IMR-90 (cell line): ENCODE measurements at regions of chr5 and their contacts with region 1.

Region 1: GRCh38 chr5:129767906-129768380 is 20.0 kb downstream of the MINAR2 start:
- DNase-seq: peak; percentile 86
- ATAC-seq: peak; percentile 96
- H3K4me3 ChIP-seq: no peak overlapping the region
- H3K27ac ChIP-seq: no peak overlapping the region
- H3K4me1 ChIP-seq: no peaks in the 10 kb centered on the region
- H3K27me3 ChIP-seq: no peaks in the 10 kb centered on the region
- CTCF ChIP-seq: peak; percentile 100
- POLR2A ChIP-seq: no peak
- RAD21 ChIP-seq: peak; percentile 91

Region 2: DNA sequence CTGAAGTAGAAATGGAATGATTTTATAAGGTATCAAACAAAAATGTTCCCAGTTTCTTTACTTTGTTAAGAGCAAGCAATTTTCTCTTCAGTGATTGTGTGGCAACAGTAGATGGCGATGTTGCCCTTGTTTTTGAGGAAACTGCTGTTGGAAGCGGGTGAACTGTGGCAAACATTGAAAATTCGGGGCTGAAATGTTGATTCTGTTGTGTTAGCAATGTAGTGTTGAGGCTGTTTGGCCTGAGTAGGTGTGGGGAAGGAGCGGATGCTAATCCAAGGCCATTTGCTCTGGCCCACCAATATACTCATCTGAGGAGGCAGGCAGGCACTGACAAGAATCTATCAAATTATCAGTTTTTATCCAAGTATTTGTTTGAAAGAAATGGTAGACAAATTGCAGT is 1554.6 kb before region 1 on chr5:
- CTCF ChIA-PET with region 1: no interaction called
- POLR2A ChIA-PET with region 1: no interaction called
- dilution Hi-C with region 1: no loop called
- in situ Hi-C with region 1: no loop called
- intact Hi-C with region 1: loop called (anchors 5 kb)
- DNase-seq: peak; percentile 77
- ATAC-seq: peak; percentile 68
- H3K4me3 ChIP-seq: no peak overlapping the region
- H3K27ac ChIP-seq: no peak overlapping the region
- H3K4me1 ChIP-seq: peaks cover 3% of the 10 kb centered on the region; the same call in 1 of the 2 replicates
- H3K27me3 ChIP-seq: no peaks in the 10 kb centered on the region
- CTCF ChIP-seq: peak; percentile 92
- POLR2A ChIP-seq: 0 out of 2 replicates have a peak, but pooled peaks have one; percentile 38
- RAD21 ChIP-seq: peak; percentile 93

Region 3: GRCh38 chr5:129113871-129114270 is 654.1 kb before region 1 on chr5:
- CTCF ChIA-PET with region 1: no interaction called
- POLR2A ChIA-PET with region 1: no interaction called
- dilution Hi-C with region 1: no loop called
- in situ Hi-C with region 1: no loop called
- intact Hi-C with region 1: loop called (anchors 5 kb)
- DNase-seq: no peak
- ATAC-seq: no peak
- H3K4me3 ChIP-seq: no peak overlapping the region
- H3K27ac ChIP-seq: no peak overlapping the region
- H3K4me1 ChIP-seq: no peaks in the 10 kb centered on the region
- H3K27me3 ChIP-seq: no peaks in the 10 kb centered on the region
- CTCF ChIP-seq: 0 out of 2 replicates have a peak, but pooled peaks have one; percentile 7
- POLR2A ChIP-seq: no peak
- RAD21 ChIP-seq: no peak

Region 4: DNA sequence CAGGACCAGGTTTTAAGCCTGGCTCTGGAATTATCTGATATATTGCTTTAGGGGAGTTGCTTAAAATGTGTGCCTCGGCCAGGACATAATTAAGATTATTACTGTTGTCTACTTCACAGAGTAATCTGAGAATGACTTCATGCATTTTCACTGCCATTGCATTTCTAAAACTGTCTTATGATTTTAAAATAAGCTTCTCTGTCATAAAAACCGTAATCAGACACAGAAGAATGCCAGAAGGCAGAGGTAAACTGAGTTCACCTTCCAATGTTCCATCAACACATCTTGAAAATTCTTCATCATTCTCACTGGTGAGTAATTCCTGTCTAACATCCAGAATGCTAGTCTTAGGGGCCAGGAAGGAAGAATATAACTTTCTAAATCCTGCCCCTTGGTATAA is 626.2 kb before region 1 on chr5:
- CTCF ChIA-PET with region 1: no interaction called
- POLR2A ChIA-PET with region 1: no interaction called
- dilution Hi-C with region 1: no loop called
- in situ Hi-C with region 1: no loop called
- intact Hi-C with region 1: no loop called
- DNase-seq: no peak
- ATAC-seq: no peak
- H3K4me3 ChIP-seq: no peak overlapping the region
- H3K27ac ChIP-seq: no peak overlapping the region
- H3K4me1 ChIP-seq: no peaks in the 10 kb centered on the region
- H3K27me3 ChIP-seq: no peaks in the 10 kb centered on the region
- CTCF ChIP-seq: no peak
- POLR2A ChIP-seq: no peak
- RAD21 ChIP-seq: no peak

Region 5: DNA sequence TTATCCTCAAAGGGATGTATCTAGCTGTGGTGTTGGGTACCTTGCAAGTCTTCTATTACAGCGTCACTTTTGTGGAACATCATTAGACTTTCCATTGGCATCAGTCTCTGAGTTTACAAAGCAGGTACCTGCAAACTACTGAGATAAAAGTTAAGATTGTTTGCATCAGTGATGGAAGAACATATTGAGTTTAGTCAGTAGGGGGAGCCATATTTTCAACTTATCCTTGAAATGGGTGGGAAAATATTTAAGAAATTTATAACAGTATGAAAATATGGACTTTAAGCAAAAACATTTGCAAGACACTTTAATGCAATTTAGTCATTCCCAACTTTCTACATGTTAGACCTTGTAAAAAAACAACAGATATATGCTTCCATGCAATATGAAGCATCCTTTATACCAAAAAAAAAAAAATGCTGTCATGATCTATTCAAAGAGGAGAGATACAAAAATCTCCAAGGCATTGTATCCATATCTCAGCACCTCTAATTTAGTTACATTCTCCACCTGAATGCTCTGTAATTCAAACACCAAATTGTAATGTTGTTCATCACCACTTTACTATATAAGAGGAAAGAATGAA is 406.4 kb before region 1 on chr5:
- CTCF ChIA-PET with region 1: interaction called, 3 read pairs
- POLR2A ChIA-PET with region 1: no interaction called
- dilution Hi-C with region 1: no loop called
- in situ Hi-C with region 1: no loop called
- intact Hi-C with region 1: loop called (anchors 1 kb)
- DNase-seq: peak; percentile 3
- ATAC-seq: no peak; the same call in 1 of the 2 replicates
- H3K4me3 ChIP-seq: no peak overlapping the region
- H3K27ac ChIP-seq: no peak overlapping the region
- H3K4me1 ChIP-seq: no peaks in the 10 kb centered on the region
- H3K27me3 ChIP-seq: no peaks in the 10 kb centered on the region
- CTCF ChIP-seq: peak; percentile 47
- POLR2A ChIP-seq: no peak
- RAD21 ChIP-seq: 0 out of 2 replicates have a peak, but pooled peaks have one; percentile 28

Region 6: GRCh38 chr5:129460936-129461711 is 306.8 kb before region 1 on chr5:
- CTCF ChIA-PET with region 1: interaction called, 3 read pairs
- POLR2A ChIA-PET with region 1: no interaction called
- dilution Hi-C with region 1: no loop called
- in situ Hi-C with region 1: no loop called
- intact Hi-C with region 1: loop called (anchors 1 kb)
- DNase-seq: no peak
- ATAC-seq: peak; percentile 52
- H3K4me3 ChIP-seq: peak overlapping the region; percentile 40; the same call in 1 of the 2 replicates
- H3K27ac ChIP-seq: no peak overlapping the region
- H3K4me1 ChIP-seq: no peaks in the 10 kb centered on the region
- H3K27me3 ChIP-seq: peaks cover 23% of the 10 kb centered on the region
- CTCF ChIP-seq: no peak
- POLR2A ChIP-seq: no peak
- RAD21 ChIP-seq: no peak

Region 7: DNA sequence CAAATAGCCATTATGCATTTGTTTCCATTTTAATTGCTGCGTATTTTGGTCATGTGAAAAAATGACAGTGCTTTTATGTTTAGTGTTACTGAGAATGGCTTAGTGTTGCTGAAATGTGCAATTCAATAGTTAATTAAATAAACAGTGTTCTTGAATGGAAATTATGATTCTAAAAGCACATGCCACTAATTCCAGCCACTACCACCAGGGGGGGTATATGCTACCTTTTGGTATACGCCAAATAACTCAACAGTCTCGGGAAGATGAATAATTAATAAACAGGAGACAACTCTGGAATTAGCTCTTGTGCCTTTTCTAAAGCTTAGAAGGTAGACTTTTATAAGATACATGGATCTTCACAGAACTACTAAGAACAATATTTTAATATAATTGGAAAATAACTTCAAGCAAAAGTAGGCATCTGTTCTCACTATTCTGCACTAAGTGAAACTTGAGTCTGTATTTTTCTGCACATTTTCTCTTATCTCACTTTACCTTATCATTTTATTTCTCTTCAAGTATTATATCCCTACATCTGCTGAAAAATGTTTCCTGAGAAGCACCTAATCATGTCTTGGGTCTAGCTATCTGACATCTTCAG is 103.5 kb before region 1 on chr5:
- CTCF ChIA-PET with region 1: interaction called, 9 read pairs
- POLR2A ChIA-PET with region 1: no interaction called
- dilution Hi-C with region 1: no loop called
- in situ Hi-C with region 1: no loop called
- intact Hi-C with region 1: loop called (anchors 1 kb)
- DNase-seq: peak; percentile 35
- ATAC-seq: no peak
- H3K4me3 ChIP-seq: no peak overlapping the region
- H3K27ac ChIP-seq: no peak overlapping the region
- H3K4me1 ChIP-seq: no peaks in the 10 kb centered on the region
- H3K27me3 ChIP-seq: no peaks in the 10 kb centered on the region
- CTCF ChIP-seq: peak; percentile 63
- POLR2A ChIP-seq: no peak
- RAD21 ChIP-seq: peak; percentile 42

Region 8: GRCh38 chr5:131109540-131110255 is 1341.8 kb after region 1 on chr5:
- CTCF ChIA-PET with region 1: interaction called, 3 read pairs
- POLR2A ChIA-PET with region 1: no interaction called
- dilution Hi-C with region 1: no loop called
- in situ Hi-C with region 1: no loop called
- intact Hi-C with region 1: loop called (anchors 1 kb)
- DNase-seq: peak; percentile 33
- ATAC-seq: peak; percentile 91
- H3K4me3 ChIP-seq: no peak overlapping the region
- H3K27ac ChIP-seq: no peak overlapping the region
- H3K4me1 ChIP-seq: no peaks in the 10 kb centered on the region
- H3K27me3 ChIP-seq: no peaks in the 10 kb centered on the region; the same call in 1 of the 2 replicates
- CTCF ChIP-seq: peak; percentile 73
- POLR2A ChIP-seq: no peak
- RAD21 ChIP-seq: peak; percentile 72